Astrocyte of the cerebellum (primary cell): ENCODE measurements at regions of chr16 and their contacts with region 1.

Region 1: DNA sequence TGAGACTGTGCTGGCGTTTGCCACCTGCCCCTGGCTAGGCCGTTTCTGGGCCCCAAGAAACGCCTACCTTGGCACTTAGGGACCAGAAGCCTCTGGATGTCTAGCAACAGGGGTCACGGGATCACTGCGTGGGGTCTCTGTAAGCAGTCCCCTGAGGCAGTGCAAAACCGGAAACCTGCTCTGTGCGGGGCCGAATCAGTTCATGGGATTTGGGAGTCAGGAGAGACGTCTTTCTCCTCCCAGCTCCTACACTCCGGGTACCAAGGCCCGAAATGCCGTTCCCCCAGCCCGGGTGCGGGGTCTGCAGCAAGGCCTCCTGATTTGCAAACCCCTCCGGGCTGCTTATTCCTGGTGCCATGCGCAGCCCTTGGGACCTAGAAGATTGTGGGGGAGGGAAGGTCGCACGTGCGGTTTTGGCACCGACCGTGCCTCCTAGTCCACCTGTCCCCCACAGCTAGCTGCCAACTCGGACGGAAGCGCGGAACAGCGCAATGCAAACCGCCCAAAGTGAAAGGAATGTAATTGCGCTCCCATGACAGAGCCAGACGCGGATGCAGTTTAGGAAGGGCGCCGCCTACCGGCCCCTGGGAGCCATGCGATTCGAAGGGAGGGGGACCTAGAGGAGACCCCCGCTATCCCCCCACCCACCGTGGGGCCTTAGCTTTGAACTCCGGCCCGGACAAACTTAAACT is 6.5 kb downstream of the IRX5 start:
- DNase-seq: peak; percentile 62
- H3K4me3 ChIP-seq: peak overlapping the region; percentile 51
- CTCF ChIP-seq: peak; percentile 92

Region 2: GRCh38 chr16:54286090-54286993 is 650.8 kb before region 1 on chr16 and contains the start of gene IRX3:
- in situ Hi-C with region 1: loop called (anchors 5 kb)
- DNase-seq: peak; percentile 82
- H3K4me3 ChIP-seq: peak within 1 kb of the TSS; percentile 78
- CTCF ChIP-seq: no peak